ENCODE measurements at regions of chr1 and their contacts with region 1.

Region 1: GRCh38 chr1:112882271-112882744 is 73.7 kb downstream of the SLC16A1 start:
- DNase-seq: no peak
- H3K4me3 ChIP-seq: no peak overlapping the region
- H3K27ac ChIP-seq: no peak overlapping the region
- H3K4me1 ChIP-seq: peaks cover 14% of the 10 kb centered on the region
- H3K27me3 ChIP-seq: no peaks in the 10 kb centered on the region
- CTCF ChIP-seq: no peak

Region 2: GRCh38 chr1:112809253-112809684 is 73.0 kb before region 1 on chr1:
- CTCF ChIA-PET with region 1: no interaction called
- dilution Hi-C with region 1: no loop called
- in situ Hi-C with region 1: no loop called
- intact Hi-C with region 1: loop called (anchors 1 kb)
- DNase-seq: peak; percentile 62
- H3K4me3 ChIP-seq: no peak overlapping the region
- H3K27ac ChIP-seq: no peak overlapping the region
- H3K4me1 ChIP-seq: peaks cover 9% of the 10 kb centered on the region
- H3K27me3 ChIP-seq: no peaks in the 10 kb centered on the region
- CTCF ChIP-seq: peak; percentile 95 to 96

Region 3: GRCh38 chr1:112904071-112904830 is 21.9 kb after region 1 on chr1:
- CTCF ChIA-PET with region 1: no interaction called
- dilution Hi-C with region 1: no loop called
- in situ Hi-C with region 1: no loop called
- intact Hi-C with region 1: loop called (anchors 2 kb)
- DNase-seq: peak; percentile 98
- H3K4me3 ChIP-seq: no peak overlapping the region
- H3K27ac ChIP-seq: peak overlapping the region; percentile 81
- H3K4me1 ChIP-seq: peaks cover 51% of the 10 kb centered on the region
- H3K27me3 ChIP-seq: no peaks in the 10 kb centered on the region
- CTCF ChIP-seq: no peak

Region 4: GRCh38 chr1:112935461-112936289 is 53.4 kb after region 1 on chr1:
- CTCF ChIA-PET with region 1: no interaction called
- dilution Hi-C with region 1: no loop called
- in situ Hi-C with region 1: no loop called
- intact Hi-C with region 1: loop called (anchors 5 kb)
- DNase-seq: peak; percentile 64
- H3K4me3 ChIP-seq: no peak overlapping the region
- H3K27ac ChIP-seq: peak overlapping the region; percentile 86
- H3K4me1 ChIP-seq: peaks cover 42% of the 10 kb centered on the region
- H3K27me3 ChIP-seq: no peaks in the 10 kb centered on the region
- CTCF ChIP-seq: no peak

Region 5: DNA sequence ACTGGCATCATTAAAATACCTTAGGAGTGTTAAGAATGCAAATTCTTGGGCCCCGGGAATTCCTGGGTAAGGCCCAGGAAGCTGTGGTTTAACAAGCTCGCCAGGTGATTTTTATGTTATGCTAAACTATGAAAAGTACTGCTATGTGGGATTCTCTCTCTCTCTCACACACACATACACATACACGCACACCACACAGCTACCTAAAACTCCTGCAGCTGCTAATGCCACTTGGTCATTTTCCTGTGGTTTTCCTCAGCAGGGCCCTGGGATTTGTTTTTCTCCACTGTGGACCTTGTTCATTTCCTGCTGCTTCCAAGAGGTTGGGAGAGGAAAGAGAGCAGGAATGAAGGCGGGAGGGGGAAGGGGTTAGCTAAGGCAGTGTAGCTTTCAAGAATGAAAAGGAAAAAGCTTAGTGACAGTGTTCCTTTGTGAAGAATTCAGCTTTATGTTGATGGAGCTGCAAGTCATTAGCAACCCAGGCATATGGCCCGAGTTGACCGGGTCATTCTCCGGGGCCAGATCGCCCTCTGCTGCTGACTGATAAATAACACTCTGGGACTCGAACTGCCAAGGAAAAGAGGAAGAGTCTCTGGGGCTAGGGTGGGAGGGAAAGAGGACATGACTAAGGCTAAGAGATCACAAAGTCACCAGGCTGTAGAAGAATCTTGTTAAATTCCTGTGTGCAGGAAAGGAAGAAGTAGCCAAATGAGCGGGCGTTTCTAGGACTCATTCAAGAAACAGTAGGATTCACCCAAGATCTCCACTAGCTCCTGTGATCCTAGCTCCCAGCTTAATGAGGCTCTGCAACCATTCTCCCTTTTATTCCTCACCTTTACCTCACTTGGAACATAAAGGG is 160.2 kb after region 1 on chr1:
- CTCF ChIA-PET with region 1: interaction called, 6 read pairs
- dilution Hi-C with region 1: no loop called
- in situ Hi-C with region 1: loop called (anchors 5 to 10 kb)
- intact Hi-C with region 1: loop called (anchors 1 kb)
- DNase-seq: peak; percentile 84
- H3K4me3 ChIP-seq: no peak overlapping the region
- H3K27ac ChIP-seq: peak overlapping the region; percentile 79
- H3K4me1 ChIP-seq: peaks cover 31% of the 10 kb centered on the region
- H3K27me3 ChIP-seq: no peaks in the 10 kb centered on the region
- CTCF ChIP-seq: peak; percentile 41 to 71

Region 6: GRCh38 chr1:113057006-113057405 is 174.7 kb after region 1 on chr1:
- CTCF ChIA-PET with region 1: no interaction called
- dilution Hi-C with region 1: loop called (anchors 5 kb)
- in situ Hi-C with region 1: no loop called
- intact Hi-C with region 1: no loop called
- DNase-seq: no peak
- H3K4me3 ChIP-seq: no peak overlapping the region
- H3K27ac ChIP-seq: no peak overlapping the region
- H3K4me1 ChIP-seq: no peaks in the 10 kb centered on the region
- H3K27me3 ChIP-seq: no peaks in the 10 kb centered on the region
- CTCF ChIP-seq: no peak

Region 7: GRCh38 chr1:113072757-113073478 is 190.6 kb after region 1 on chr1 and contains the start of gene LRIG2:
- CTCF ChIA-PET with region 1: interaction called, 4 read pairs
- dilution Hi-C with region 1: no loop called
- in situ Hi-C with region 1: loop called in 1 of 2 experiments (anchors 10 kb)
- intact Hi-C with region 1: loop called (anchors 2 kb)
- DNase-seq: peak; percentile 99
- H3K4me3 ChIP-seq: peak within 1 kb of the TSS; percentile 65 to 92 (median 86)
- H3K27ac ChIP-seq: peak within 1 kb of the TSS; percentile 75
- H3K4me1 ChIP-seq: peaks cover 11% of the 10 kb centered on the region
- H3K27me3 ChIP-seq: no peaks in the 10 kb centered on the region
- CTCF ChIP-seq: peak; percentile 57 to 66
- total RNA-seq, gene LRIG2: 11.6 to 17.3 TPM

Measured in mammary epithelial cell (primary cell).